H1 (cell line): ENCODE measurements at regions of chr12 and their contacts with region 1.

Region 1: DNA sequence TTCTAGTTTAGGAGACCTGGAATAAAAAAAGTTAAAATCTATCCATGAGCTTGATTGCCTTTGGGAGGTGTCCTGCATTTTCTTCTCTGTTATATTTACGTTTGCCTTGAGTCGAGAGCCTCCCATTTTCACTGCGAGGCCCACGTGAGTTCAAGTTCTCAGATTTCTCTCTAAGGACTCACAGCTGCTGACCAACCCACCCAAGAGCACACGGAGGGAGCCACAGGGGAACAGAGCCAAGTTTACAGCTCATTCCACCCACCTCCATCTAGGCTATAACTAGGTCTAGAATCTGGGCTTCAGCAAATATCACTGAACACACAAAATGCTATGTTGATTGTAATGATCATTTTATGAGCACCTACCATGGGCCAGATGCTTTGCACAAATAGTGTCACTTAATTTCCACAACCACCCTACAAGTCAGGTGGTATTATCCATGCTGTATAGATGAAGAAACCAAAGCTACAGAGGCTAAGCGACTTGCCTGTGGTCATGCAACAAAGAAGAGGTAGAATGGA is 16.7 kb downstream of the ALDH1L2 start:
- DNase-seq: no peak
- H3K4me3 ChIP-seq: no peak overlapping the region
- H3K27ac ChIP-seq: no peak overlapping the region
- H3K4me1 ChIP-seq: no peaks in the 10 kb centered on the region
- H3K27me3 ChIP-seq: no peaks in the 10 kb centered on the region
- CTCF ChIP-seq: no peak
- EP300 ChIP-seq: no peak
- POLR2A ChIP-seq: no peak
- RAD21 ChIP-seq: no peak

Region 2: GRCh38 chr12:105053116-105053572 is 14.4 kb before region 1 on chr12:
- CTCF ChIA-PET with region 1: interaction called, 10 read pairs
- POLR2A ChIA-PET with region 1: interaction called, 3 read pairs
- DNase-seq: peak; percentile 44 to 86
- H3K4me3 ChIP-seq: no peak overlapping the region
- H3K27ac ChIP-seq: no peak overlapping the region
- H3K4me1 ChIP-seq: no peaks in the 10 kb centered on the region
- H3K27me3 ChIP-seq: no peaks in the 10 kb centered on the region
- CTCF ChIP-seq: peak in 2 of 3 experiments; percentile 80 to 93; a peak in 3 of 4 replicates
- EP300 ChIP-seq: no peak
- POLR2A ChIP-seq: no peak
- RAD21 ChIP-seq: peak; percentile 93 to 95